Activated CD8-positive, alpha-beta T cell treated with anti-CD3 and anti-CD28 coated beads for 36 hours (primary cell): ENCODE measurements at regions of chrX and their contacts with region 1.

Region 1: GRCh38 chrX:21985332-21985777 is 44.8 kb downstream of the SMS start:
- DNase-seq: peak; percentile 79
- ATAC-seq: peak; percentile 87
- H3K4me3 Mint-ChIP-seq: no peak overlapping the region
- H3K27ac Mint-ChIP-seq: peak overlapping the region; percentile 52
- H3K4me1 Mint-ChIP-seq: peaks cover 30% of the 10 kb centered on the region
- H3K27me3 Mint-ChIP-seq: no peaks in the 10 kb centered on the region
- CTCF ChIP-seq: peak; percentile 87

Region 2: GRCh38 chrX:21972721-21973120 is 12.6 kb before region 1 on chrX:
- CTCF ChIA-PET with region 1: interaction called, 16 read pairs
- POLR2A ChIA-PET with region 1: no interaction called
- intact Hi-C with region 1: no loop called
- DNase-seq: peak; percentile 68
- ATAC-seq: peak; percentile 89
- H3K4me3 Mint-ChIP-seq: no peak overlapping the region
- H3K27ac Mint-ChIP-seq: peak overlapping the region; percentile 92
- H3K4me1 Mint-ChIP-seq: peaks cover 35% of the 10 kb centered on the region
- H3K27me3 Mint-ChIP-seq: no peaks in the 10 kb centered on the region
- CTCF ChIP-seq: no peak

Region 3: GRCh38 chrX:22063284-22063683 is 77.9 kb after region 1 on chrX:
- CTCF ChIA-PET with region 1: interaction called, 7 read pairs
- POLR2A ChIA-PET with region 1: interaction called, 6 read pairs
- intact Hi-C with region 1: loop called (anchors 5 kb)
- DNase-seq: peak; percentile 73
- ATAC-seq: peak; percentile 50
- H3K4me3 Mint-ChIP-seq: peak overlapping the region; percentile 45
- H3K27ac Mint-ChIP-seq: peak overlapping the region; percentile 94
- H3K4me1 Mint-ChIP-seq: peaks cover 82% of the 10 kb centered on the region
- H3K27me3 Mint-ChIP-seq: no peaks in the 10 kb centered on the region
- CTCF ChIP-seq: no peak

Region 4: DNA sequence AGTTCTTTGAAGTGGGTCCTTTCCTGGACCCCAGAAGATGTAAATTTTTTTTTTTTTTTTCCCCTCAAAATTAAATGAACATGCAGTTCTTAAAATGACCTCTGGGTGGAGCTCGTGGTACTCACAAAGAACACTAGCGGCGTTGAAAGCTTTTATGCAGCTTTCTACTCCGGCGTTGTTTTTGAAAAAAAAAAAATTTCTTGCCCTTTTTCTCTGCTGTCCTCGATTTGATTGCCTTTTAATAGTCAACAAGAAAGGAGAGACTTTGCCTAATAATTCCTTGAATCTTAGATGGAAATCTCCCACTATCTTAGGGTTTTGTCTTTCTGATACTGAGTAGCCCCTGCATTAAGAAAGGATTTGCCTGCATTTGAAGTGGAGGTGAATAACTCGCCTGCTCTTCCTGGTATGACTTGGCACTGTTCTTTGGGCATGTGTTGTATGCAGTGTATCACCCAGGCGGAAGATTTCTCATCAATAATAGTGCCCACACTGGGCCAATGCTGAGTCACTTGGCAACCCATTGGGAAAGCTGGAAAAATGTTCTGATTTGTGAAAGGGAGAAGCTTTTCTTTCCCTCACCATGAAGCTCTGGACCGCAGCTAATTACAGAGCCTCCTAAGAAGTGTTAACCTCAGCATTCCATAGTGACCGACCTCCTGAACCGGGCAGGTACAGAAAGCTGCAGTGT is 150.8 kb after region 1 on chrX:
- CTCF ChIA-PET with region 1: interaction called, 33 read pairs
- POLR2A ChIA-PET with region 1: no interaction called
- intact Hi-C with region 1: no loop called
- DNase-seq: peak; percentile 24
- ATAC-seq: peak; percentile 58
- H3K4me3 Mint-ChIP-seq: no peak overlapping the region
- H3K27ac Mint-ChIP-seq: peak overlapping the region; percentile 36
- H3K4me1 Mint-ChIP-seq: peaks cover 15% of the 10 kb centered on the region
- H3K27me3 Mint-ChIP-seq: no peaks in the 10 kb centered on the region
- CTCF ChIP-seq: peak; percentile 65

Region 5: DNA sequence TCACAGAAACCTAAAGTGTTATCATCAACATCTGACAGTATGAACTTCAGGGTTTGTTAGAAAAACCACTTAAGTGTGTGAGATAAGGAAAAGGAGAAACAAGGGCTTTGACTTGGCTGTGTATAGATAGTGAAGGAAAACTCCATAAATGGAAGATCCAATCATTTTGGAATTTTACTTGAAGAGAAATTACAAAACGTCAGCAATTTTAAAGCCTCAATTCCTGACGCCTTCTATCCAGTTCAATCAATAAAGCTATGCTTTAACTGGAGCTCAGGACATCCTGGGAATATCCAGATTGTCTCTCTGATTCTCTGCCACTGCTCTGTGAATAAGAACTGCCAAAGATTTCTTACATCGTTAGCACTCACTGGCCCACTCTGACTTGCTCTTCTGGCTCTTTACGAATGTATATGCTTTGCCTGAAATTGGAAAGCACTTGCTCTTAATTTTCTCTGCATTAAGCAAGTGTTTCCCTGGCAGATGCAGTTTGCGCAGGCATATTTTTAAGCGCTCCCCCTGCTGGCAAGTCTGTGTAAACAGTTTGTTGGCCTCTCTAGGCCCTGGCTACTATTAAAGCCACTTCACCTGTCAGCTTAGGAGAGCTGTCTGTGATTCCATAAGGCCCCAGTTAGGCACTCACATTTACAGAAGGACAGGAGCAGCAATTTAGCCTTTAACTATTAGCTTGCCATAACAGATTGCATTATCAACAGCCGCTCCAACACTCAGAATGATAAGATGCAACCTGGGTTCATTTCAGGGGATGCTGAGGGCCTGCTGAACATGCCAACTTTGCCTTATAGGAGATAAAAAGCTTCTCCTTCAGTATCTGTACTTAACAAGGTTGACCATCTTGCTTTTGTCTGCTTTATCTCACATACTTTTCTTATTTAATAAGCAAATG is 763.0 kb after region 1 on chrX:
- CTCF ChIA-PET with region 1: interaction called, 15 read pairs
- POLR2A ChIA-PET with region 1: no interaction called
- intact Hi-C with region 1: loop called (anchors 10 kb)
- DNase-seq: peak; percentile 26
- ATAC-seq: no peak
- H3K4me3 Mint-ChIP-seq: no peak overlapping the region
- H3K27ac Mint-ChIP-seq: no peak overlapping the region
- H3K4me1 Mint-ChIP-seq: no peaks in the 10 kb centered on the region
- H3K27me3 Mint-ChIP-seq: no peaks in the 10 kb centered on the region
- CTCF ChIP-seq: peak; percentile 43